ENCODE measurements at regions of chr7 and their contacts with region 1.

Region 1: GRCh38 chr7:102390697-102391484 is 5.3 kb upstream of the PRKRIP1 start:
- DNase-seq: peak; percentile 58
- H3K4me3 Mint-ChIP-seq: no peak overlapping the region
- H3K27ac Mint-ChIP-seq: no peak overlapping the region
- H3K4me1 Mint-ChIP-seq: peaks cover 6% of the 10 kb centered on the region
- H3K27me3 Mint-ChIP-seq: no peaks in the 10 kb centered on the region

Region 2: DNA sequence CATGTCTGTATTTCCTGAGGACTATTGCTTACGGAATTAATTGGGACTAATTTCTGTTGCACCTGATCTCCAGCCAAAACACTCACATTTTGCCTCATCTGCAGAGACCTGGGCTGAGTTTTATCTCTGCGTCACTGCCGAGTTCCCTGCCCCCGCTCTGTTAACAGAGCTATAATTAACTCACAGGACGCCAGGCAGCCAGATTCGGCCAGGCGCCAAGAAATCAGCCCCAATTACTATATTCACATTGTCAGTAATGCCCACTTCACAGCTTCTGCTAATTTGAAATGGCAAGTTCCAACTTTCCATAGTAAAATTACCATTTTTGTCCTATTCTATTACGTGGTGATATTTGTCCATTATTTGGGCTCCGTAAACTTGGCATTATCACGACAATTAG is 443.0 kb before region 1 on chr7:
- intact Hi-C with region 1: no loop called
- DNase-seq: no peak
- H3K4me3 Mint-ChIP-seq: no peak overlapping the region
- H3K27ac Mint-ChIP-seq: no peak overlapping the region
- H3K4me1 Mint-ChIP-seq: peaks cover 2% of the 10 kb centered on the region
- H3K27me3 Mint-ChIP-seq: no peaks in the 10 kb centered on the region

Region 3: GRCh38 chr7:101957744-101958525 is 433.0 kb before region 1 on chr7:
- intact Hi-C with region 1: no loop called
- DNase-seq: no peak
- H3K4me3 Mint-ChIP-seq: no peak overlapping the region
- H3K27ac Mint-ChIP-seq: no peak overlapping the region
- H3K4me1 Mint-ChIP-seq: peaks cover 8% of the 10 kb centered on the region
- H3K27me3 Mint-ChIP-seq: no peaks in the 10 kb centered on the region

Region 4: GRCh38 chr7:102165136-102165535 is 225.8 kb before region 1 on chr7:
- intact Hi-C with region 1: no loop called
- DNase-seq: no peak
- H3K4me3 Mint-ChIP-seq: no peak overlapping the region
- H3K27ac Mint-ChIP-seq: no peak overlapping the region
- H3K4me1 Mint-ChIP-seq: no peaks in the 10 kb centered on the region
- H3K27me3 Mint-ChIP-seq: no peaks in the 10 kb centered on the region

Region 5: GRCh38 chr7:102279537-102280400 is 111.1 kb before region 1 on chr7:
- intact Hi-C with region 1: loop called (anchors 2 kb)
- DNase-seq: peak; percentile 35
- H3K4me3 Mint-ChIP-seq: no peak overlapping the region
- H3K27ac Mint-ChIP-seq: no peak overlapping the region
- H3K4me1 Mint-ChIP-seq: no peaks in the 10 kb centered on the region
- H3K27me3 Mint-ChIP-seq: peaks cover 6% of the 10 kb centered on the region

Measured in activated T-helper 2 cell treated with anti-CD3 and anti-CD28 coated beads, Interferon-gamma antibody, Interleukin-2, Interleukin-4, amounts not matched to agents 10 μg/mL and 5 μg/mL and 100 μg/mL, durations not matched to agents 14 hours and 24 hours and 36 hours (primary cell).